CD4-positive, alpha-beta memory T cell (primary cell): ENCODE measurements at regions of chr1 and their contacts with region 1.

Region 1: DNA sequence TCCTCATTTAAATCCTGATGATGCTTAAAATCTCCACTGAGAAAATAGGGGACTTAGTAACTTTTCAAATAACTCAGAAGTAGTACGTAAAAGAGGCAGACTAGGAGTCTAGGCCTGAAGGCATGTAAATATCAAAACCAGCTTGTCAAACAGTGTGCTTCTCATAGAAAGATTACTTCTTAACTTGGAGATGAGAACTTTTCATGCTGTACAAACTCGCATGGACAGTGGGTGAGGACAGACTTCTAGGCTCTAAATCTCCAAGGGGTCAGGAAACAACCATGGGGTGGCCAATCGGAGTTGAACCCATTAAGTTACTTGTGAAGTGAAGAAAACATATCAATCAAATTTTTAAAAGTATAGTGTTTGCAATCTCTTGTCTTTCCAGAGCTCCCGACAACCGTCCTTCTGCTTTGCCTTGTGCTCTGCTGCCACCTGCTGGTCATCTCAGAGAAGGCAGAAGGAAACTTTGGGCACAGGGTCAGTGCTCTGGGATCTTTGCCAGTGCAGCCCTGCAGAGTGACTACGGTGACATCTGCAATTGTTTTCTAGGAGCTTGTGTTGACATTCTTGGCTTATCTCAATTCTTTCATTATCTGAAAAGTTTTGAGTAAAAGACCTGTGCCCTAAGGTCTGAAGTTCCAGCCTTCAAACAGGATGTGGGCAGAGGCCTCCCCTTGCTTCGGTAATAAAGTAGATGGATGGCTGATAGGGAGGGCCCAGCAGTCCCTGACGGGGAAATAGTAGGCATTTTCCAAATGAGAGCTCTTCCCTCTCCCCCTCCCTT is 105.1 kb upstream of the PDE4B start:
- DNase-seq: peak; percentile 54 to 75 (median 66)
- H3K4me3 ChIP-seq: no peak overlapping the region
- H3K4me3 Mint-ChIP-seq: no peak overlapping the region
- H3K27ac ChIP-seq: no peak overlapping the region
- H3K27ac Mint-ChIP-seq: no peak overlapping the region
- H3K4me1 ChIP-seq: peaks cover 8% of the 10 kb centered on the region
- H3K4me1 Mint-ChIP-seq: peaks cover 0 to 9% (median 4%) of the 10 kb centered on the region in 4 donors
- H3K27me3 ChIP-seq: no peaks in the 10 kb centered on the region
- H3K27me3 Mint-ChIP-seq: peaks cover 6 to 10% of the 10 kb centered on the region in 2 donors

Region 2: GRCh38 chr1:64268653-64269557 is 1418.7 kb before region 1 on chr1:
- CTCF ChIA-PET with region 1: interaction called, 6 read pairs
- POLR2A ChIA-PET with region 1: no interaction called
- intact Hi-C with region 1: loop called (anchors 2 kb)
- DNase-seq: peak; percentile 47 to 62 (median 54)
- H3K4me3 ChIP-seq: no peak overlapping the region
- H3K4me3 Mint-ChIP-seq: no peak overlapping the region
- H3K27ac ChIP-seq: no peak overlapping the region
- H3K27ac Mint-ChIP-seq: peak overlapping the region in 1 of 7 donors; percentile 26
- H3K4me1 ChIP-seq: no peaks in the 10 kb centered on the region
- H3K4me1 Mint-ChIP-seq: no peaks in the 10 kb centered on the region
- H3K27me3 ChIP-seq: peaks cover 4% of the 10 kb centered on the region
- H3K27me3 Mint-ChIP-seq: peaks cover 9 to 22% of the 10 kb centered on the region in 2 donors

Region 3: GRCh38 chr1:64823691-64824476 is 863.7 kb before region 1 on chr1:
- CTCF ChIA-PET with region 1: no interaction called
- POLR2A ChIA-PET with region 1: no interaction called
- intact Hi-C with region 1: loop called (anchors 10 kb)
- DNase-seq: peak; percentile 59 to 68 (median 63)
- H3K4me3 ChIP-seq: no peak overlapping the region
- H3K4me3 Mint-ChIP-seq: peak overlapping the region in 5 of 8 donors; percentile 44 to 66 (median 54)
- H3K27ac ChIP-seq: no peak overlapping the region
- H3K27ac Mint-ChIP-seq: peak overlapping the region in 5 of 7 donors; percentile 13 to 82 (median 52)
- H3K4me1 ChIP-seq: peaks cover 22% of the 10 kb centered on the region
- H3K4me1 Mint-ChIP-seq: peaks cover 21 to 35% (median 30%) of the 10 kb centered on the region in 4 donors
- H3K27me3 ChIP-seq: no peaks in the 10 kb centered on the region
- H3K27me3 Mint-ChIP-seq: no peaks in the 10 kb centered on the region

Region 4: GRCh38 chr1:65075123-65075976 is 612.3 kb before region 1 on chr1:
- CTCF ChIA-PET with region 1: interaction called, 15 read pairs
- POLR2A ChIA-PET with region 1: interaction called, 3 read pairs
- intact Hi-C with region 1: loop called (anchors 5 kb)
- DNase-seq: peak; percentile 71 to 77 (median 73)
- H3K4me3 ChIP-seq: no peak overlapping the region
- H3K4me3 Mint-ChIP-seq: no peak overlapping the region
- H3K27ac ChIP-seq: no peak overlapping the region
- H3K27ac Mint-ChIP-seq: peak overlapping the region in 2 of 7 donors; percentile 14 to 16
- H3K4me1 ChIP-seq: peaks cover 2% of the 10 kb centered on the region
- H3K4me1 Mint-ChIP-seq: peaks cover 10 to 27% (median 12%) of the 10 kb centered on the region in 4 donors
- H3K27me3 ChIP-seq: no peaks in the 10 kb centered on the region
- H3K27me3 Mint-ChIP-seq: peaks cover 3 to 6% of the 10 kb centered on the region in 2 donors

Region 5: GRCh38 chr1:65230731-65231481 is 456.7 kb before region 1 on chr1:
- CTCF ChIA-PET with region 1: interaction called, 43 read pairs
- POLR2A ChIA-PET with region 1: no interaction called
- intact Hi-C with region 1: no loop called
- DNase-seq: no peak
- H3K4me3 ChIP-seq: no peak overlapping the region
- H3K4me3 Mint-ChIP-seq: no peak overlapping the region
- H3K27ac ChIP-seq: no peak overlapping the region
- H3K27ac Mint-ChIP-seq: no peak overlapping the region
- H3K4me1 ChIP-seq: no peaks in the 10 kb centered on the region
- H3K4me1 Mint-ChIP-seq: peaks cover 0 to 4% (median 0%) of the 10 kb centered on the region in 4 donors
- H3K27me3 ChIP-seq: no peaks in the 10 kb centered on the region
- H3K27me3 Mint-ChIP-seq: peaks cover 7 to 12% of the 10 kb centered on the region in 2 donors

Region 6: GRCh38 chr1:65431111-65431705 is 256.4 kb before region 1 on chr1:
- CTCF ChIA-PET with region 1: interaction called, 20 read pairs
- POLR2A ChIA-PET with region 1: no interaction called
- intact Hi-C with region 1: loop called (anchors 1 kb)
- DNase-seq: peak in 4 of 5 donors; percentile 13 to 37 (median 20)
- H3K4me3 ChIP-seq: no peak overlapping the region
- H3K4me3 Mint-ChIP-seq: no peak overlapping the region
- H3K27ac ChIP-seq: no peak overlapping the region
- H3K27ac Mint-ChIP-seq: peak overlapping the region in 1 of 7 donors; percentile 47
- H3K4me1 ChIP-seq: peaks cover 3% of the 10 kb centered on the region
- H3K4me1 Mint-ChIP-seq: peaks cover 2 to 13% (median 7%) of the 10 kb centered on the region in 4 donors
- H3K27me3 ChIP-seq: no peaks in the 10 kb centered on the region
- H3K27me3 Mint-ChIP-seq: no peaks in the 10 kb centered on the region

Region 7: GRCh38 chr1:65615859-65616258 is 71.8 kb before region 1 on chr1:
- CTCF ChIA-PET with region 1: no interaction called
- POLR2A ChIA-PET with region 1: no interaction called
- intact Hi-C with region 1: no loop called
- DNase-seq: no peak
- H3K4me3 ChIP-seq: no peak overlapping the region
- H3K4me3 Mint-ChIP-seq: no peak overlapping the region
- H3K27ac ChIP-seq: no peak overlapping the region
- H3K27ac Mint-ChIP-seq: peak overlapping the region in 1 of 7 donors; percentile 9
- H3K4me1 ChIP-seq: peaks cover 6% of the 10 kb centered on the region
- H3K4me1 Mint-ChIP-seq: peaks cover 13 to 20% (median 17%) of the 10 kb centered on the region in 4 donors
- H3K27me3 ChIP-seq: no peaks in the 10 kb centered on the region
- H3K27me3 Mint-ChIP-seq: no peaks in the 10 kb centered on the region

Region 8: GRCh38 chr1:65703853-65704252 is 16.2 kb after region 1 on chr1:
- CTCF ChIA-PET with region 1: interaction called, 32 read pairs
- POLR2A ChIA-PET with region 1: no interaction called
- intact Hi-C with region 1: no loop called
- DNase-seq: no peak
- H3K4me3 ChIP-seq: no peak overlapping the region
- H3K4me3 Mint-ChIP-seq: no peak overlapping the region
- H3K27ac ChIP-seq: no peak overlapping the region
- H3K27ac Mint-ChIP-seq: no peak overlapping the region
- H3K4me1 ChIP-seq: no peaks in the 10 kb centered on the region
- H3K4me1 Mint-ChIP-seq: no peaks in the 10 kb centered on the region
- H3K27me3 ChIP-seq: no peaks in the 10 kb centered on the region
- H3K27me3 Mint-ChIP-seq: peaks cover 12 to 13% of the 10 kb centered on the region in 2 donors